Calu3 (cell line): ENCODE measurements at regions of chr10 and their contacts with region 1.

Region 1: DNA sequence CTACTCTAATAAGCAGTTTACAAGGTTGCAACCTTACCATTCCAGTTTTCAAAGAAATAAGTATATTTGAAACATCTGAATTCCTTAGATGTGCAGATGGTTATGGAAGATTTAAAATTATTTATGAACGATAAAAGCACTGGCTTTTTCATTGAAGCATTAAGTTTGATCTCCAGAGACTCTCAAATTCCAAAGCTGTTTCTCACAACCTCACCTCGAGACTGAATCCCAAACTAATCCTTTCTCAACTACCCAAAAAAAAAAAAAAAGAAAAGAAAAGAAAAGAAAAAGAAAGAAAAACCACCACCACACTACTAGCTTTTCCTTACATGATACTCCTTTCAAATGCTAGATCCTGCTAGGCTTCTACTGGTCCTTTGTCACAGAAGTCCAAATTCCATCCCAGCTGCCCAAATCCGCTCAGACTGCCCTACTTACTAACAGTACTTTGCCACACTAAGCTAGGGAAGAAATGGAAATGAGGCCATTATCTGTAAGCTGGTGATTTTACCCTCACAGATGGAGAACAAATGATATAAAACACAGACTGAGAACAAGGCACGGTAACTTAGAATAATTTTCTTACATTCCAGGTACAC is 100.6 kb upstream of the CDK1 start:
- DNase-seq: no peak
- H3K4me3 Mint-ChIP-seq: no peak overlapping the region
- H3K27ac Mint-ChIP-seq: no peak overlapping the region
- H3K4me1 Mint-ChIP-seq: peaks cover 12% of the 10 kb centered on the region
- H3K27me3 Mint-ChIP-seq: no peaks in the 10 kb centered on the region
- CTCF ChIP-seq: no peak

Region 2: DNA sequence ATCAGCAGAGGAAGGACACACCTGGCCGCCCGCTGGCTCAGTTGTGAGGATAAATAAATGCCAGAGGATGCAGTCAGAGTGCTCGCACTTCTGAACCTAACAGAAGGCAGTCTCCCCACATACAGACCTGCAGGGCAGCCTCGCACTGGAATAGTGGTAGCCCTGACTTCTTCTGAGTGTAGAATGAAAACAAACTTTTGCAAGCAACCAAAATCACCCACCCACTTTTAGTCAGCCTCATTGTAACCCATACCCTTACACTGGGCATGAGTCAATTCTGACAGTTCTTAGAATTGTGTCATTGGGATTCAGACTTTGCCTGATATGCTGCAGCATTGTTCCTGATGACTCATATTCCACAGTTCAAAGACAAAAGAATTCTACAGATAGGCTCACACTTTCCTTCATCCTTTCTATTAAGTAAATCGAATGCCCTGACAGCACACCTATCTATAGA is 66.3 kb before region 1 on chr10:
- CTCF ChIA-PET with region 1: no interaction called
- intact Hi-C with region 1: no loop called
- DNase-seq: peak; percentile 10
- H3K4me3 Mint-ChIP-seq: no peak overlapping the region
- H3K27ac Mint-ChIP-seq: no peak overlapping the region
- H3K4me1 Mint-ChIP-seq: peaks cover 15% of the 10 kb centered on the region
- H3K27me3 Mint-ChIP-seq: no peaks in the 10 kb centered on the region
- CTCF ChIP-seq: no peak

Region 3: DNA sequence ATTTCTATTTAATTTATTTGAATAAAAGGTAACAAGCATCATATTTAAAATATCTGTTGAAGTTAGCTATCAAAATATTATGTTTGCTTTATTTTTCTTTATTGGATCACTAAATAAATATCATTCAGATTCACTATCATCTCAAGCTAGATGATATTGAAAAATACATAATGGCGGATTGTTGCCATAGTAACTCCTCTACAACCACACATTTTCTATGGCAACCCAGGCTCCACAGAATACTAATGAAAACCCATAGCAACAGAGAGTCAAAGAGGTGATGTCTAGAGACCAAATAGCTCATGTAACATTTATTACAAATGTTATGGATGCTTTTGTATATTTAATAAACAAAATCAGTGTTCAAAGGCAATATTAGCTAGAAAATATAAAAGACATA is 48.3 kb before region 1 on chr10:
- CTCF ChIA-PET with region 1: no interaction called
- intact Hi-C with region 1: no loop called
- DNase-seq: no peak
- H3K4me3 Mint-ChIP-seq: no peak overlapping the region
- H3K27ac Mint-ChIP-seq: no peak overlapping the region
- H3K4me1 Mint-ChIP-seq: peaks cover 23% of the 10 kb centered on the region
- H3K27me3 Mint-ChIP-seq: no peaks in the 10 kb centered on the region
- CTCF ChIP-seq: no peak

Region 4: DNA sequence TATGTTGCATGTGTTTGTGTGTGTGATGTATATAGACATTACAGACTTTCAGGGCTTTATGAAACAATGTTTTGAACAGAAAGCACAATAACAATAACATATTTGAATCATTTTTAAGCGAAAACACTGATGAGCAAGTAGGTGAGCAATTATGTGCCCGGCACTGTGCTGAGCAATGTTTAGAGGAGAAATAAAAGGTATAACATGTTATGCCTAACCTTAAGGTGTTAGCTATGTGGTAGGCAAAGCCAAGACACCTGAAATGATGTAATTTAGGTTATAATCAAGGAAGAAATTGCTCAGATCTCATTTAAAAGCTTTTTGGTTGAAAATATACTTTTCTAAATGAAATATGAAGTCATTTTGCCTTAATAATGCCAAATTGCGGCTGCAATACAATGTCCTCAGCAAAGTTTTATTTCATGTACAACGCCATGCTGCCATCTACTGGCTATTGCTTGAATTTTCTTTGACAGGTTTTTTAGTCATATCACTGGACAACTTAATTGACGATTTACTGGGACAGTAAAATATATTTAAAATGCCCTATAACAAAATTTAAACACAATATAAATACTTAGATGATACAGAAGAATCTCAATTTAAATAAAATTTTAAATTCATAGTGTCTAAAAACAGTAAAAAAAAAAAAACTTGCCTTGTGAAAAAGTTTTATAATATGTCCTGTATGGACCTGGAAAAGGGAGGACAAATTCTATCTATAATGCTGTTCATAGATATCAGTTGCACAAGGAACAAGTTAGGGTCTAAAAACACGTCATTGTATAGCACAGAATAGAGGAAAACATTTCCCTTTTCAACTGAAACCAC is 30.4 kb before region 1 on chr10:
- CTCF ChIA-PET with region 1: no interaction called
- intact Hi-C with region 1: no loop called
- DNase-seq: peak; percentile 60
- H3K4me3 Mint-ChIP-seq: no peak overlapping the region
- H3K27ac Mint-ChIP-seq: no peak overlapping the region
- H3K4me1 Mint-ChIP-seq: peaks cover 9% of the 10 kb centered on the region
- H3K27me3 Mint-ChIP-seq: no peaks in the 10 kb centered on the region
- CTCF ChIP-seq: peak; percentile 83

Region 5: GRCh38 chr10:60710041-60710440 is 32.4 kb after region 1 on chr10:
- CTCF ChIA-PET with region 1: no interaction called
- intact Hi-C with region 1: loop called (anchors 1 kb)
- DNase-seq: no peak
- H3K4me3 Mint-ChIP-seq: no peak overlapping the region
- H3K27ac Mint-ChIP-seq: no peak overlapping the region
- H3K4me1 Mint-ChIP-seq: peaks cover 19% of the 10 kb centered on the region
- H3K27me3 Mint-ChIP-seq: no peaks in the 10 kb centered on the region
- CTCF ChIP-seq: no peak